Kidney (tissue), 22 donors: ENCODE measurements at regions of chr5 and their contacts with region 1.

Region 1: GRCh38 chr5:73303148-73304079 is 130.4 kb downstream of the TMEM174 start:
- DNase-seq: peak in 4 of 5 donors; percentile 68 to 82 (median 75)
- H3K4me3 ChIP-seq: no peak overlapping the region
- H3K27ac ChIP-seq: no peak overlapping the region
- H3K4me1 ChIP-seq: peaks cover 0 to 6% (median 5%) of the 10 kb centered on the region in 3 donors
- H3K27me3 ChIP-seq: peaks cover 22% of the 10 kb centered on the region
- CTCF ChIP-seq: no peak

Region 2: GRCh38 chr5:73152411-73153388 is 150.7 kb before region 1 on chr5:
- intact Hi-C with region 1: no loop called
- DNase-seq: no peak
- H3K4me3 ChIP-seq: no peak overlapping the region
- H3K27ac ChIP-seq: peak overlapping the region in 1 of 2 donors; percentile 32
- H3K4me1 ChIP-seq: peaks cover 0 to 36% (median 31%) of the 10 kb centered on the region in 3 donors
- H3K27me3 ChIP-seq: no peaks in the 10 kb centered on the region
- CTCF ChIP-seq: no peak

Region 3: GRCh38 chr5:73233347-73234200 is 69.8 kb before region 1 on chr5:
- intact Hi-C with region 1: no loop called
- DNase-seq: peak; percentile 67 to 80 (median 74)
- H3K4me3 ChIP-seq: peak overlapping the region in 2 of 3 donors; percentile 40 to 51
- H3K27ac ChIP-seq: no peak overlapping the region
- H3K4me1 ChIP-seq: peaks cover 0 to 2% (median 0%) of the 10 kb centered on the region in 3 donors
- H3K27me3 ChIP-seq: peaks cover 11% of the 10 kb centered on the region
- CTCF ChIP-seq: no peak

Region 4: DNA sequence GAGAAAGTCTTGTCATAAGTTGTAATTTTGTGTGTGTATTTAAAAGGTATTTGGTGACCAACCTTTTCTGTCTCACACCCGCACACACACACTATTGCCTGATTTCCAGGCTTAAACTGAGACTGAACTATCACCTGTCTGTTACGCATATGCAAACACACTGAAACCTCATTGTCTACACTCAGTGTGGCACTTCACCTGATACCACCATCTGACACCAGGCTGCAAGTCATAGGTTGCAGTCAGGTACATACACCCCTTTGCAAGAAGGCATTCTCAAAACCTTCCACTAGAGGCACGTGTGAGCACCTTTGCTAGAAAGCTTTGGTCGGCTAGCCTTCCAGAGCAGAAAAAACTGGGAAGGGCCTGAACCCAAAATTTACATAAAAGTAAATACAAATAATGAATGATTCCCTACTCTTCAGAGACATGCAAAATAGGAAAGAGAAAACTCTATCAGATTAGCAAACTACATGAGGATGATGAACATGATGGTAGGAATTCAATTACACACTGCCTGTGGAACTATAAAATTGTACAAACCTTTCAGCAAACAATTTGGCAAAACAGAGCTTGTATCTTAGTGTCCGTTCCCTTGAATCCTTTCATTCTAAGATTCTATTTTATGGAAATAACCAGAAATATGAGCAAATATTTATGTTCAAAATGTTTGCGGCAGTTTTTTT is 151.1 kb after region 1 on chr5:
- intact Hi-C with region 1: loop called (anchors 10 kb)
- DNase-seq: peak in 4 of 5 donors; percentile 64 to 90 (median 81)
- H3K4me3 ChIP-seq: no peak overlapping the region
- H3K27ac ChIP-seq: no peak overlapping the region
- H3K4me1 ChIP-seq: peaks cover 0 to 2% (median 0%) of the 10 kb centered on the region in 3 donors
- H3K27me3 ChIP-seq: peaks cover 28% of the 10 kb centered on the region
- CTCF ChIP-seq: peak; percentile 71